Endothelial cell of umbilical vein (primary cell): ENCODE measurements at regions of chr12 and their contacts with region 1.

Region 1: DNA sequence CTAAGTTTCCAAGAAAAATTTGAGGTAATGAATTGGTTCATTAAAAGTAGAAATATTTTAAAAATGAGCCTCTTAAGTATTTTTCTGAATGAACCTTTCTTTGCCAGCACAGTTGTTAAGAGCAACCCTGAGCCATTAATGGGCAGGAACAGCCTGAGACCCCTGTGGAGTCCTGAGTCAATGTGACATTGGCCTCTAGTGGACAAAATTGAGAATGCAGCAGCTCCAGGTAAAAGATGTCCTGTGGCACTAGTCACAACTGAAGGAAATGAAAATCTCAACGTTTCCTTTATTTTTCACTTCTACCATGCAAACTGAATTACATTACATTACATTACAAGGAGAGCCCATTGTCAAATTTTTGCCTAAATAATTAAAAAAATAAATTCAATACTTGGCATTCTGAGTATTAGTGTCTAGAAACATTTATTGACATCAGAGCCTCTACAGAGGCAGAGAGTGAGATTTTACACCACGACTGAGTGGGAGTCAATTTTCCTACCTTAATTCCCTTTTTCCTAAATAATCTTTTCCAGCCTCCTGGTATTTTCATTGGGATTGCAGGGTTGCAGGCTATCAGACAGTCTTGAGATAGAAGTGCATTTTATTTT is 135.7 kb downstream of the PPM1H start:
- DNase-seq: peak; percentile 73
- H3K4me3 ChIP-seq: no peak overlapping the region
- H3K27ac ChIP-seq: no peak overlapping the region
- H3K4me1 ChIP-seq: no peaks in the 10 kb centered on the region
- H3K27me3 ChIP-seq: no peaks in the 10 kb centered on the region
- CTCF ChIP-seq: peak; percentile 88 to 91
- POLR2A ChIP-seq: no peak

Region 2: GRCh38 chr12:62210422-62210821 is 588.8 kb before region 1 on chr12:
- CTCF ChIA-PET with region 1: no interaction called
- POLR2A ChIA-PET with region 1: no interaction called
- dilution Hi-C with region 1: no loop called
- intact Hi-C with region 1: loop called (anchors 5 kb)
- DNase-seq: peak; percentile 39
- H3K4me3 ChIP-seq: no peak overlapping the region
- H3K27ac ChIP-seq: no peak overlapping the region
- H3K4me1 ChIP-seq: no peaks in the 10 kb centered on the region
- H3K27me3 ChIP-seq: peaks cover 1 to 2% of the 10 kb centered on the region in 2 experiments
- CTCF ChIP-seq: peak; percentile 64 to 69
- POLR2A ChIP-seq: no peak

Region 3: DNA sequence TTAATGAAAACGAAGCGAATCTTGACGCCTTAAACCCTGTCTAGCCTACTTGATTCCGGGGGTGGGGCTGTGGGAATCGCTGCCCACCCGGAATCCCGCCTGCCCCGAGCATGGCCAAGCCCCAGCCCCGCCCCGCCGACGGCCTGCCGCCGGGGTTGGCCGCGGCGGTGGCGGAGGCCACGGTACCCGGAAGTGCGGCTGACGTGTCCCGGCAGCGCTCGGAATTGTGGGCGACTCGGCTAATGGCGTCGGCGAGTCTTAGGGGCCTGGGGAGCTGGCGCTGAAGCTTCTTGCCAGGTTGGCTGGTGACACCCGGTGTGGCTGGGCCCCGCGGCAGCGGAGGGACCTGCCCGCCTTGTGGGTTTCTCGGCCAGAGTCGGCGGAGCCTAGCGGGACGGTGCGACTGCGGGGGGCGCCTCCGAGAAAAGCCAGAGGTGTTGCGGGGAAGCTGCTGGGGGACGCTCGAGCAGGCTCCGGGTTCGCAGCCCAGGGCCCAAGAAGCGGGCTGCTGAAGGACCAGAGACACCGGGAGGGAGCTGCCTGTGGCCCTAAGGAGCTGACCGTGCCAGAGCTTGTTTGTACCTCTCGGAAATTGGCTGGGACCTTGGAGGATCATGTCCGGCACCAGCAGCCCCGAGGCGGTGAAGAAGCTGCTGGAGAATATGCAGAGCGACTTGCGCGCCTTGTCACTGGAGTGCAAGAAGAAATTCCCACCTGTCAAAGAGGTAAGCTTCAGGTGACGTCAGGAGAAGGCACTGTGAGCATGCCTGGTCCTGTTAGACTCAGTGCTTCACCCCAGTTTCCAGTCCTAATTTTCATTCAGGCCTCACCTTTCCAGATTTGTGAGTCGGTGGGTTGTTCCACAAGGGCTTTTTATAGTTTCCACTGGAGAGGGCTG is 332.4 kb before region 1 on chr12 and contains the start of gene MON2:
- CTCF ChIA-PET with region 1: interaction called, 5 read pairs
- POLR2A ChIA-PET with region 1: no interaction called
- dilution Hi-C with region 1: no loop called
- intact Hi-C with region 1: loop called (anchors 10 kb)
- DNase-seq: peak; percentile 89
- H3K4me3 ChIP-seq: peak within 1 kb of the TSS; percentile 83 to 90 (median 88)
- H3K27ac ChIP-seq: peak within 1 kb of the TSS; percentile 92
- H3K4me1 ChIP-seq: peaks cover 9% of the 10 kb centered on the region
- H3K27me3 ChIP-seq: peaks cover 0 to 2% of the 10 kb centered on the region in 2 experiments
- CTCF ChIP-seq: no peak
- POLR2A ChIP-seq: peak; percentile 92
- total RNA-seq, gene MON2: 41.8 and 43.0 TPM in 2 replicates

Region 4: GRCh38 chr12:62581288-62582064 is 217.8 kb before region 1 on chr12:
- CTCF ChIA-PET with region 1: interaction called, 356 read pairs
- POLR2A ChIA-PET with region 1: interaction called, 3 read pairs
- dilution Hi-C with region 1: no loop called
- intact Hi-C with region 1: loop called (anchors 1 kb)
- DNase-seq: peak; percentile 58
- H3K4me3 ChIP-seq: no peak overlapping the region
- H3K27ac ChIP-seq: no peak overlapping the region
- H3K4me1 ChIP-seq: no peaks in the 10 kb centered on the region
- H3K27me3 ChIP-seq: no peaks in the 10 kb centered on the region
- CTCF ChIP-seq: peak; percentile 43 to 58
- POLR2A ChIP-seq: no peak

Region 5: DNA sequence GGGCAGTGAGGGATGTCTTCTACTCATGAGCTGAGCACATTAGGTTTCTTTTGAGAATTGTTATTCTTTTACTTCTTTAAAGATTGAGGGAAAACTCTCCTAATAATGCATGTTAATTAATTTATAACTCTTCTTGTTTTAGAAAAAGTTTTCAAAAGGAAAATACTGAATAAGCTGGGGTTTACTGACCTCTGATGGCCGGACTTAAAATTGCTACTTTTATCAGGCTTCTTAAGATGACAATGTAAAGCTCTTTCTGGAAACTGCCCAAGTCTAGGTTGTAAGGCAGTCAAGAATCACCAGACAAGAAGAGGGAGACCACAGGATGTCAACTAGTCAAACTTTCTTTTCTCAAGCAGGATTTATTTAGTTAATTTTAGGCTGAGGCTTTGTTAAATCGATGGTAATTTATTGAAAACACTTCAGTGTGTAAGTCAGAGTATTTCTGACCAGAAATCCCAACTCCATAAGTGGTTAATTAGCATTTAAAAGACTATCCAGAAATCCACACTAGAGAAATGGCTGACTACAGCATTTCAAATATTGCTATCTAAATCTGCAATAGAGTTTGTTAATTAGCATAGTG is 269.7 kb after region 1 on chr12:
- CTCF ChIA-PET with region 1: interaction called, 31 read pairs
- POLR2A ChIA-PET with region 1: no interaction called
- dilution Hi-C with region 1: no loop called
- intact Hi-C with region 1: loop called (anchors 2 kb)
- DNase-seq: peak; percentile 80
- H3K4me3 ChIP-seq: no peak overlapping the region
- H3K27ac ChIP-seq: no peak overlapping the region
- H3K4me1 ChIP-seq: no peaks in the 10 kb centered on the region
- H3K27me3 ChIP-seq: peaks cover 2% of the 10 kb centered on the region in 2 experiments
- CTCF ChIP-seq: peak; percentile 29 to 35
- POLR2A ChIP-seq: no peak